Spleen (tissue), 13 donors: ENCODE measurements at regions of chr9 and their contacts with region 1.

Region 1: GRCh38 chr9:108562176-108562575 is 293.6 kb downstream of the ACTL7B start:
- DNase-seq: no peak
- H3K4me3 ChIP-seq: no peak overlapping the region
- H3K27ac ChIP-seq: no peak overlapping the region
- H3K4me1 ChIP-seq: no peaks in the 10 kb centered on the region
- H3K27me3 ChIP-seq: no peaks in the 10 kb centered on the region
- CTCF ChIP-seq: no peak
- POLR2A ChIP-seq: no peak

Region 2: DNA sequence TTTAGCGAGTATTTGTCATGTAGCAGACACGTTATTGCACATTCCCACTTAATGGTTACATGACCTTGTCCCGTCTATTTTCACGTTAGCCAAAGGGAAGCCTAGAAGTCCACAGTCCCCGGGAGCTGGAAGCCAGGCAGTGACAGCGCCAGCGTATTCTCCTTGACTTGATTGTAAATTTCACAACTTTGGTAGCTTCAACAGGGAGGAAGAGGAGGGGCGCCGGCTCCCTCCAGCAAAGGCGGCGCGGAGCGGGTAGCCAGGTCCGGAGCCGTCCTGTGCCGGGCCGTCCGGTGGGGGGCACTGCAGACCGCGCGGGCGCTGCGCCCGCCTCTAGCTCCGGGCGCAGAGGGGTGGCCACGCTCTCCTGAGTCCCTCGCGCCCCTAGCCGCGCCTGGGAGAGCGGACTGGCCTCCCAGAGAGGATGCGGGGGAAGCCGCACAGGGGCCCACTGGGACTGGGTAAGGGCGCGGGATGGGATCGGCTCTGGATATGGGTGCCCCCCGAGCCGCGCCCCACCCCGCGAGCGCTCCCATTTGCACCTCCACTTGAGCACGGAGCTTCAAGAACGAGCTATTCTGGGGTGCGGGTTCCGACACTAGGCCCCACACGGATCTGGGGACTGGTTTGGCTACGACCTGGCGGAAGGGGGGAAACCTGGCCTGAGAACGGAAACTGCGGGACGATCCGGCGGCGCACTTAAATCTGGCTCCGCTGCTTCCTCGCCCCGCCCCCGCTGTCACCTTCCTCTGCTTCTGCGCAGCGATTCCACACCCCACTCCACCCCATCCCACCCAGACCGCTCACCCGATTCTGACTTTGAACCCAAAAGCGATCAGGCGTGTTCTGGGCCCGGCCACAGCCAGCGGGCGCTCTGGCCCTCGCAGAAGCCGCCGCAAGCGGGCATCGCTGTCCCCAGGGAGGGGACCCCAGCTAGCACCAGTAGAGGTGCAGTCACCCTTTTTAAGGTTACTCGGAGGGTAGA is 1096.4 kb before region 1 on chr9:
- intact Hi-C with region 1: loop called (anchors 5 kb)
- DNase-seq: peak; percentile 93
- H3K4me3 ChIP-seq: peak overlapping the region; percentile 40 to 72 (median 46)
- H3K27ac ChIP-seq: peak overlapping the region; percentile 22 to 81 (median 70)
- H3K4me1 ChIP-seq: peaks cover 0 to 17% (median 15%) of the 10 kb centered on the region in 6 donors
- H3K27me3 ChIP-seq: peaks cover 0 to 51% (median 16%) of the 10 kb centered on the region in 7 donors
- CTCF ChIP-seq: peak; percentile 46 to 91 (median 84)
- POLR2A ChIP-seq: no peak

Region 3: DNA sequence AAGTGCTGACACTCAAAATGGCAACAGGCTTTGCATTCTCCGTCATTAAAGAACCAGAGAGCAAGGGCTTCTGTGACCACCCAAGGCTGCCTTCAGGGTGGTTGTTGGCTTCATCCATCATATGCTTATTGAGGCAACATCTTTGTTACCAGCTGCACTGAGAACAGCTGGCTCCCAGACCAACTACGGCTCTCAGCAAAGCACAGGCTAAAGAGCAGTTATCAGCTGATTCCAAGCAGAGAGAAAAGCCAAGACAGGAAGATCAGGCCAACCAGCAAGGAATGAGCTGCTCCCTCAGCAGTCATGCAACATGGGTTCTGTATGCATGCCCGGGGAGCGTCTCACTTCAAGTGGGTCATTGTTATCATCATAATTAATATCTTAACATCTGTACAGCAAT is 65.3 kb before region 1 on chr9:
- intact Hi-C with region 1: no loop called
- DNase-seq: no peak
- H3K4me3 ChIP-seq: no peak overlapping the region
- H3K27ac ChIP-seq: no peak overlapping the region
- H3K4me1 ChIP-seq: no peaks in the 10 kb centered on the region
- H3K27me3 ChIP-seq: no peaks in the 10 kb centered on the region
- CTCF ChIP-seq: no peak
- POLR2A ChIP-seq: no peak

Region 4: DNA sequence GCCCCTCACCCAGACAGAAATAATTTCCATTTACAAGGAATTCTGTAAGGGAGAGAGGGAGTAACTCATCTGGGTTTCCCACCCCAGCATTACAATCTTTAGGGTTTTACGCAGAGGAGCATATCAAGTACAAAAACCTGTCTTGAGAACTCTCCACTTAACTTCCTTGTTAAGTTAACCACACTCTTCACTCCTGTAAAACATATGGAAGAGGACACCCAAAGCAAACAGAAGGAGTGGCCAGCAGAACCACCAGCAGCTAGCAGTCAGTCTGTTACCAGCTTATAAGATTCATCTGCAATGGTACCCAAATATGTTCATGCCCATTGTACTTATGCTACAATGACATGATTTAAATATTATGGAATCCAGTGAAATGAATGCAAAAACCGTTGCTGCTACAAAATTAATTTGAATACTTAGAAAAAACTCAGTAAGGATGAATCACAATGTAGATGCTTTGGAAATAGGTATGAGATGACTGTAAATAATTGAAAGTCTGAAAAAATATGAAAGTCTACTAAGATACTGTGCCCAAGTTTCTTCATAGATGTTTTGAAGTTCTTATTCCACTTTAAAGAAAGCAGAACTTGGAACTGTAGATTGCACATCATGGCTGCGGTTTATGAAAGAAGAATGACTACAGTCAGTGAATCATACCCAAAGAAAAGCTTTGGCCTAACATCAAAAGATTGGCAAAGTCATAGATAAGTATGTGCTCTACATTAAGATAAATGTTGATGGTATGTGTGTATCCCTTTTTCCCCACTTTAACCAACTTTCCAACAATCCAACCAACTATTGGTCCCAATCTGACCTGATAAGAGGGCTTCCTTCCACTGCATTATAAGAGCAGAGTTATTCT is 60.0 kb after region 1 on chr9:
- intact Hi-C with region 1: no loop called
- DNase-seq: no peak
- H3K4me3 ChIP-seq: no peak overlapping the region
- H3K27ac ChIP-seq: peak overlapping the region in 3 of 8 donors; percentile 15 to 50 (median 30)
- H3K4me1 ChIP-seq: no peaks in the 10 kb centered on the region
- H3K27me3 ChIP-seq: no peaks in the 10 kb centered on the region
- CTCF ChIP-seq: no peak
- POLR2A ChIP-seq: no peak